ENCODE measurements at regions of chr9 and their contacts with region 1.

Region 1: DNA sequence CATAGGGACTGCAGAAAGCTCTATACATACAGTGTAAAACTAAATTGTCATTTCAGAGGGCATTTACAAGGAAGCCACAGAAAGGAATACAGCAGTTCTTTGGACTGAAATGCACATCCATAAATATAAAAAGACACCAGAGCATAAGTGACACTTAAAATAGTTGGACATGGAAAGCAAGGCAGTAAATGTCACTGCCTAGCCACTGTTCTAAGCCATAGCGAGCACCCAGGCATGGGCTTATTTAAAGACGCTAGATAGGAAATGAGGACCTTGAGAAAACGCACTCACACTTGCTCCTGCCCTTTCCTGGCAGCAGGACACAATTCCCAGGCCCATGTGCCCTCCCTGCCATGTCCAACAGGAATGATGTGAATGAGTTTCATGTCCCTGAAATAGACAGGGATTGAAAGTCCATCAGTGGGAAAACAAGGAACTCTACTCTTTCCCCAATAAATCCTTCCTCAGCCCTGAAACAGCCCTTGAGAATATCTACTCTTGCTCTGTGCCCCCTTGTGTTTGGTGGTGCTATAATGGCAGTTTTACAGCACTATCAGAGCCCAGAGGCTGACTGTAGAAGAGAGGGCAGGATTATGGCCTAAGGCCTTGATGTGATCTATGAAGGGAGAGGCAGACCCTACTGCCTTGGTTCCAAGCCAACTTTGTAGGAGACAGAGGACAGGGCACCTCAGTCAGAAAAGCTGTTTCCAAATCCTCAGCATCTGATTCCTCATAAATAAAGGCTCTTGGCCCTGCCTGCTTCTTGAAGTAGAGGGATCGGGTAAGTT is 182.9 kb downstream of the SAXO1 start:
- DNase-seq: no peak
- ATAC-seq: no peak
- H3K4me3 ChIP-seq: no peak overlapping the region
- H3K27ac ChIP-seq: no peak overlapping the region
- H3K4me1 ChIP-seq: no peaks in the 10 kb centered on the region
- H3K27me3 ChIP-seq: no peaks in the 10 kb centered on the region; a peak in 2 of 5 replicates
- CTCF ChIP-seq: no peak
- EP300 ChIP-seq: no peak
- POLR2A ChIP-seq: no peak
- RAD21 ChIP-seq: no peak

Region 2: GRCh38 chr9:18861609-18862544 is 11.8 kb after region 1 on chr9:
- CTCF ChIA-PET with region 1: no interaction called
- POLR2A ChIA-PET with region 1: no interaction called
- in situ Hi-C with region 1: no loop called
- intact Hi-C with region 1: no loop called
- DNase-seq: no peak
- ATAC-seq: no peak; the same call in 2 of the 3 replicates
- H3K4me3 ChIP-seq: no peak overlapping the region
- H3K27ac ChIP-seq: no peak overlapping the region
- H3K4me1 ChIP-seq: no peaks in the 10 kb centered on the region
- H3K27me3 ChIP-seq: no peaks in the 10 kb centered on the region; a peak in 1 of 5 replicates
- CTCF ChIP-seq: no peak
- EP300 ChIP-seq: no peak
- POLR2A ChIP-seq: no peak
- RAD21 ChIP-seq: no peak

Region 3: GRCh38 chr9:19441730-19442129 is 591.6 kb after region 1 on chr9:
- CTCF ChIA-PET with region 1: no interaction called
- POLR2A ChIA-PET with region 1: no interaction called
- in situ Hi-C with region 1: no loop called
- intact Hi-C with region 1: loop called (anchors 10 kb)
- DNase-seq: no peak
- ATAC-seq: no peak
- H3K4me3 ChIP-seq: no peak overlapping the region
- H3K27ac ChIP-seq: no peak overlapping the region
- H3K4me1 ChIP-seq: no peaks in the 10 kb centered on the region
- H3K27me3 ChIP-seq: no peaks in the 10 kb centered on the region
- CTCF ChIP-seq: no peak
- EP300 ChIP-seq: no peak
- POLR2A ChIP-seq: no peak
- RAD21 ChIP-seq: no peak